ENCODE measurements at regions of chr18 and their contacts with region 1.

Region 1: GRCh38 chr18:7177116-7177744 is 53.7 kb upstream of the LRRC30 start:
- ATAC-seq: peak; percentile 71 to 100 (median 90)
- H3K4me3 ChIP-seq: no peak overlapping the region
- H3K27ac ChIP-seq: no peak overlapping the region
- H3K4me1 ChIP-seq: no peaks in the 10 kb centered on the region

Region 2: GRCh38 chr18:6920099-6920899 is 256.9 kb before region 1 on chr18:
- in situ Hi-C with region 1: loop called in 3 of 9 experiments (anchors 10 to 25 kb)
- ATAC-seq: peak in 6 of 8 experiments; percentile 31 to 87 (median 58)
- H3K4me3 ChIP-seq: no peak overlapping the region
- H3K27ac ChIP-seq: no peak overlapping the region
- H3K4me1 ChIP-seq: no peaks in the 10 kb centered on the region

Region 3: GRCh38 chr18:6929370-6930102 is 247.7 kb before region 1 on chr18:
- in situ Hi-C with region 1: loop called in 3 of 9 experiments (anchors 10 to 25 kb)
- ATAC-seq: no peak
- H3K4me3 ChIP-seq: no peak overlapping the region
- H3K27ac ChIP-seq: no peak overlapping the region
- H3K4me1 ChIP-seq: no peaks in the 10 kb centered on the region

Region 4: DNA sequence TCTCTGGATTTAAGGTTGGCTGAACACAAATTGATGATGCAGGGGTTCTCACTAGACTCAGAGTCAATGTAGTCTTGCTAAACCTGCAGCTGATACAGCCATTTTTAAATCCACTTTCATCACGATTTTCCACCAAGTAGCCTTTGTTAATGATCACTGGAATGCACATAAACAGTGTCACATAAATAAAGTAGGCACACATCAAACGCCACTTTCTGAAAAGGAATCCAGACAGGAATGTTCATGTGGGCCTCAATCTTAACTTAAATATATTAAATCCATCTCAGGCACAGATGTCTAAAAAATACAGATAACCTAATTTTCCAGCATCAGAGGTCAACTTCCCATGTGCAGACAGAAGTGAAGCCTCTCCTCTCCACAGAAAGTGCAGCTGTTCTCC is 118.0 kb before region 1 on chr18:
- in situ Hi-C with region 1: no loop called
- ATAC-seq: peak in 1 of 8 experiments; percentile 13
- H3K4me3 ChIP-seq: no peak overlapping the region
- H3K27ac ChIP-seq: no peak overlapping the region
- H3K4me1 ChIP-seq: peaks cover 0 to 20% of the 10 kb centered on the region in 2 donors

Region 5: DNA sequence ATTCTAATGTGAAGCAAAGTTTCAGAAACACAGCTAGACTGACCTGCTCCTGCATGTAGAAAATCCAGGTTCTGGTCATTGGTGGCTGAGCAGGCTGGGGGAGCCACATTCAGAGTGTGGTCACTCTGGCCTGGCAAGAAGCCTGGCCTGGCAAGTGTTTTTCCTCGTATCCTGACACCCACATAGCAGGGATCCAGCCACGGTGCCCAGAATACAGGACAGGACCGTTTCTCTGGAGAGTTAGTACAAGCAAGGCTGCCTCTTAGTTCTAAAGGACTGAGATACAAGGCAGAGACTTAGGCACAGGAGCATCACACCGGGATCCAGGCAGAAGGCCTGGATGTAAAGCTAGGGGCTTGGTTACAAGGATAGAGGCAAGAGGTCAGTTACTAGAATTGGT is 54.9 kb before region 1 on chr18:
- in situ Hi-C with region 1: no loop called
- ATAC-seq: no peak
- H3K4me3 ChIP-seq: no peak overlapping the region
- H3K27ac ChIP-seq: no peak overlapping the region
- H3K4me1 ChIP-seq: no peaks in the 10 kb centered on the region